ENCODE measurements at regions of chr3 and their contacts with region 1.

Region 1: DNA sequence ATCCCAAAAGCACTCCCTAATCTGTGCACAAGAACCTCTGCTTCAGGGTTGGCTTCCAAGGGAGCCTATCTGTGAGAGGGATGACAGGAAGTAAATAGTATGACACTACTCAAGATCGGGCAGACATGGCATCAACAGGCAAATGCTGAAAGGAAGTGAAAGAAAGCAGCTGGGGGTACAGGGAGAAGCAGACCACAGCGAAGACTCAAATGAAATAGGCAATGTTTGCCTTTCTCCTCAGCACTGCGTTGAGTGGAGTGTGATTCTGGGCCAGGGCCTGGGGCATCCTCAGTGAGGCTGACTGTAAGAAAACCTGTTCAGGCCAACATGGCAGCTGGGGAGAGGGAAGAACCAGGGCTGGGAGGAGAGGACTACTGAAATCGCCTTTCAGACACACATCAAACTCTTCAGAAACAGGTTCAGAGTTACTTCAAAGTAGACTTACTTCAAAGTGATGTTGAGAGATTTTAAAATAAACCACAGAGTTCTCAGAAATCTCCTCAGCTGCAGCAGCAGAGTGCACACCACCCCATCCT is 96.6 kb downstream of the SLC9A9 start:
- DNase-seq: no peak
- H3K4me3 ChIP-seq: no peak overlapping the region
- CTCF ChIP-seq: no peak

Region 2: DNA sequence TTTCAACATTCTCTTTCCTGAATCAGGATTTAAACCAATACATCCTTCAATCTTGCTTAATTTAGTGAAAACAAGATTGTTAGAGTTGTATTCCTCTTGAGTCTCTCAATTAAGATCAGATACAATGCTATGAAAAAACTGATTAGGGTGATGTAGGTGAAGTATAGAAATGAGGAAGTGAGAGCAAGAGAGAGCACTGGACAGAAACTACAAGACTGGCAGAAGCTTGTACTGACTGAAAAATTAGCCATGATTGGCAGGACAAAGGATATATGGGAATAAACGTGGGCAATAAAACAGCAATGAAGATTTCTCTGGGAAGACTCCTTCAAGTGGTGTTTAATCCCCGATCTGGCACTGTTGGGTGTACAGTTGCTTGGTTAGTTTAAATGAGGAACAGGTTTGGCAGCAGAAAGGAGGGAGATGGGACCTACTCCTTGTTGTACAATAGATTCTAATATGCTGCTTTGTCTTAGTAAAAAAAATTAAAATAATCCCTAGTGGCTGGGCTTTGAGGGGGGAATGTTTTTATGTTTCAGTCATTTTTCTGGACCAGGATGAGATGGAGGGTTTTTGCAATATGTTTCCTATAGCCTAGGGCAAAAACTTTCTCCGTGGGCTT is 156.1 kb before region 1 on chr3:
- in situ Hi-C with region 1: no loop called
- DNase-seq: no peak
- H3K4me3 ChIP-seq: no peak overlapping the region
- CTCF ChIP-seq: no peak

Region 3: GRCh38 chr3:143668924-143669790 is 82.6 kb before region 1 on chr3:
- in situ Hi-C with region 1: loop called (anchors 5 kb)
- DNase-seq: no peak
- H3K4me3 ChIP-seq: no peak overlapping the region
- CTCF ChIP-seq: no peak

Region 4: DNA sequence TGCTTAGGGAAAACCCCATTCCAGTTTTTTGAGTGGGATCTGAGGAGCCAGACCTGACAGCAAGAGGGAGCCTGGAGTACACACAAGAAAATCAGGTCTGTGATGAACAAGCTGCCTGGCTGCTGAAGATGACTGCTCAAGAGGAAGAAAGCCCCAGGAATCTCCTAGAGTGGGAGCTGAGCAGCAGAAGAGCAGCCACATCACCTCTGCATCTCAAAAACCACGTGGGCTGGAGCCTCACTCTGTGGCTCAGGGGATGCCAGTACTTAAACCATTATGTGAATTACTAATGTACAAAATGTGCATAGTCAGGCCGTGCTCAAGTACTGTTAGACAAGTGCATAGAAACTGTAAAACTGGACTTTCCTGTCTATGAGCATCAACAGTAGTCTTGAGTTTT is 44.2 kb after region 1 on chr3:
- in situ Hi-C with region 1: no loop called
- DNase-seq: no peak
- H3K4me3 ChIP-seq: no peak overlapping the region
- CTCF ChIP-seq: no peak

Measured in astrocyte of the cerebellum (primary cell).